ENCODE measurements at regions of chr17 and their contacts with region 1.

Region 1: GRCh38 chr17:47615766-47616424 is 33.8 kb upstream of the KPNB1 start:
- DNase-seq: peak in 4 of 5 donors; percentile 45 to 54 (median 50)
- H3K4me3 ChIP-seq: no peak overlapping the region
- H3K4me3 Mint-ChIP-seq: no peak overlapping the region
- H3K27ac ChIP-seq: no peak overlapping the region
- H3K27ac Mint-ChIP-seq: peak overlapping the region in 5 of 7 donors; percentile 22 to 80 (median 63)
- H3K4me1 ChIP-seq: no peaks in the 10 kb centered on the region
- H3K4me1 Mint-ChIP-seq: peaks cover 0 to 6% (median 4%) of the 10 kb centered on the region in 4 donors
- H3K27me3 ChIP-seq: no peaks in the 10 kb centered on the region
- H3K27me3 Mint-ChIP-seq: no peaks in the 10 kb centered on the region

Region 2: GRCh38 chr17:47363171-47363570 is 252.7 kb before region 1 on chr17:
- CTCF ChIA-PET with region 1: interaction called, 31 read pairs
- POLR2A ChIA-PET with region 1: no interaction called
- intact Hi-C with region 1: no loop called
- DNase-seq: no peak
- H3K4me3 ChIP-seq: no peak overlapping the region
- H3K4me3 Mint-ChIP-seq: no peak overlapping the region
- H3K27ac ChIP-seq: no peak overlapping the region
- H3K27ac Mint-ChIP-seq: no peak overlapping the region
- H3K4me1 ChIP-seq: no peaks in the 10 kb centered on the region
- H3K4me1 Mint-ChIP-seq: no peaks in the 10 kb centered on the region
- H3K27me3 ChIP-seq: no peaks in the 10 kb centered on the region
- H3K27me3 Mint-ChIP-seq: peaks cover 0 to 1% of the 10 kb centered on the region in 2 donors

Region 3: DNA sequence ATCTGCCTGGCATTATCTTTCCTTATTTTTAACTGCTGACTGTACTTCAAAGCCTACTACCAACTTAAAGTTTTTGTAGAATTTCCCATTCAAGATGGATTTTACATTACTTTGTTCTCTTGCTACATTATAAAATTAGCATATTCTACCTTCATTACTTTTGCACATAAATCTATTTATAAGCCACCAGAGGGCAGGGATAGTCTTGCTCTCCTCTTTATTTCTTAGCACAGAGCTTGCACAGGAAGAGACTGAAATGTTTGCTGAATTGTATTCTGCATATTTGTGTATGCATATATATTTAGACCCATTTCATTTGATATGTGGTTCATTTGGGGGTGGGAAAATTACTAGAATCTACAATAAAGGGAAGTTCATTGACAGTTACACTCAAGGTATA is 706.2 kb after region 1 on chr17:
- CTCF ChIA-PET with region 1: no interaction called
- POLR2A ChIA-PET with region 1: no interaction called
- intact Hi-C with region 1: no loop called
- DNase-seq: peak in 1 of 5 donors; percentile 2
- H3K4me3 ChIP-seq: no peak overlapping the region
- H3K4me3 Mint-ChIP-seq: no peak overlapping the region
- H3K27ac ChIP-seq: no peak overlapping the region
- H3K27ac Mint-ChIP-seq: peak overlapping the region in 3 of 7 donors; percentile 1 to 36 (median 1)
- H3K4me1 ChIP-seq: no peaks in the 10 kb centered on the region
- H3K4me1 Mint-ChIP-seq: peaks cover 12 to 40% (median 26%) of the 10 kb centered on the region in 4 donors
- H3K27me3 ChIP-seq: no peaks in the 10 kb centered on the region
- H3K27me3 Mint-ChIP-seq: no peaks in the 10 kb centered on the region